ENCODE measurements at regions of chr16 and their contacts with region 1.

Region 1: GRCh38 chr16:50476486-50477255 is 71.5 kb upstream of the NKD1 start:
- DNase-seq: no peak

Region 2: DNA sequence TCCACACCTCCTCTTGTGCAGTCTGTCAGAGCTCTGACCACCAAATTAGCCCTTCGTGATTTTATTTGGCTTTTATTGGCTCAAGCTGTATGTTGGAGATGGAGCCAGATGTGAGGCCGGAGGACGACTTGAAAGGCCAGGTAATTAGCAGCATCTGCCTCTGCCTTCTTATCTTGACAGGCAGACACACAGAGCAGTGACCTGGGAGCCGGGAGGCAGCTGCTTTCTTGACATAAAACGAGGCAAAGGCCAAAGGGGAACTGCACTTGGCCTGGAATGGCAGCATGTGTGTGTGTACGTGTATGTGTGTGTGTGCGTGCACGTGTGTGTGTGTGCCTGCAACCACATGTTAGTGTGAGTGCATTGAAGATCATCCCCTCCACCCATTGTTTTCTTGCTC is 51.0 kb before region 1 on chr16:
- intact Hi-C with region 1: loop called in 1 of 2 experiments (anchors 1 kb)
- DNase-seq: no peak